Endothelial cell of umbilical vein (primary cell): ENCODE measurements at regions of chr3 and their contacts with region 1.

Region 1: DNA sequence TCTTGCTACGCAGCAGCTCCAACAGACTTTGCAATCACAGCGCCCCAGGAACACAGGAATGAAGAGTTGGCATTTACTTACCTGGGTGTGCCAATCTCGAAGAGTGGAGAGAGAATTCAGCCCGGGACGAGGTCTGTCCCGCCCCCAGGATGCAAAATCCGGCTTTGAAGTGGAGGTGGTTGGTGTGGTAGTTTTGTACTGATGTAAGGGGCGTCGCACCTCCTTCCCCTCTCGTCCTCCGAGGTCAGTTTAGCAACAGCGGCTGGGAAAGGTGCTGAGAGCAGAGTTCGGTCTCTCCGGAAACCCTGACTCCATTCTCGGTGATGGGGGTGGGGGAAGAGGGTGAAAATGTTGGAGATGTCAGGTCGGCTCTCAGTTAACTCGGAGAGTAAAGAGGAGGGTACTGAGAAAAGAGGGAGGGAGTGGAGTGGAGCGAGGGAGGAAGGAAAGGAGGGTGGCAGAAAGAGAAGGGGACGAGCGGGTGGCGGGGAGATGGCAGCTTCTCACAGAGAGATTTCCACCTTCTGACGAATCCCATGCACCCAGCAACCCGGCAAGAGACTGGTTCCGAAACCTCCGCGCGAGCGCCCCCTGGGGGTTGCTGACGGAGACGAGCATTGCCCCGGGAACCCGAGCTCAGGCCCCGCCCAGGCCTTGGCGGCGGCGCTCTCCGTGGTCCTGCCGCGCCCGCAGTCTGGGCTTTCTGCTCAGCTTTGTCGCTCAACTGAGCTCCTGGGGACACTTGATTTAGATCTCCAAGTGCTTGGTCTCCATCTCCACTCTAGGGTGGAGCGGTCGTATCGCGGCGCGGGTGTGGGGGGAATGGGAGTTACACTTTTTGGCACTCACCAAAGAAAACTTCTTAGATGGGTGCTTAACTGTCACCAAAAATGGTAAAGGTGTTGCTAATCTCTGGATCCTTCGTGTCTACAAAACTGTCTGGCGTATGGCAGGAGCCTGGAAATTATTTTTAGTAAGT is at the start of gene CPNE4:
- DNase-seq: peak; percentile 60
- H3K4me3 ChIP-seq: no peak within 1 kb of the TSS
- H3K27ac ChIP-seq: no peak within 1 kb of the TSS
- H3K4me1 ChIP-seq: no peaks in the 10 kb centered on the region
- H3K27me3 ChIP-seq: peaks cover 25 to 31% of the 10 kb centered on the region in 2 experiments
- CTCF ChIP-seq: peak; percentile 87 to 95
- POLR2A ChIP-seq: no peak
- total RNA-seq, gene CPNE4: not detected in 2 replicates

Region 2: GRCh38 chr3:131033480-131034080 is 1001.2 kb before region 1 on chr3:
- CTCF ChIA-PET with region 1: interaction called, 42 read pairs
- POLR2A ChIA-PET with region 1: no interaction called
- dilution Hi-C with region 1: no loop called
- intact Hi-C with region 1: loop called (anchors 1 kb)
- DNase-seq: peak; percentile 75
- H3K4me3 ChIP-seq: no peak overlapping the region
- H3K27ac ChIP-seq: no peak overlapping the region
- H3K4me1 ChIP-seq: no peaks in the 10 kb centered on the region
- H3K27me3 ChIP-seq: no peaks in the 10 kb centered on the region
- CTCF ChIP-seq: peak; percentile 32
- POLR2A ChIP-seq: no peak

Region 3: DNA sequence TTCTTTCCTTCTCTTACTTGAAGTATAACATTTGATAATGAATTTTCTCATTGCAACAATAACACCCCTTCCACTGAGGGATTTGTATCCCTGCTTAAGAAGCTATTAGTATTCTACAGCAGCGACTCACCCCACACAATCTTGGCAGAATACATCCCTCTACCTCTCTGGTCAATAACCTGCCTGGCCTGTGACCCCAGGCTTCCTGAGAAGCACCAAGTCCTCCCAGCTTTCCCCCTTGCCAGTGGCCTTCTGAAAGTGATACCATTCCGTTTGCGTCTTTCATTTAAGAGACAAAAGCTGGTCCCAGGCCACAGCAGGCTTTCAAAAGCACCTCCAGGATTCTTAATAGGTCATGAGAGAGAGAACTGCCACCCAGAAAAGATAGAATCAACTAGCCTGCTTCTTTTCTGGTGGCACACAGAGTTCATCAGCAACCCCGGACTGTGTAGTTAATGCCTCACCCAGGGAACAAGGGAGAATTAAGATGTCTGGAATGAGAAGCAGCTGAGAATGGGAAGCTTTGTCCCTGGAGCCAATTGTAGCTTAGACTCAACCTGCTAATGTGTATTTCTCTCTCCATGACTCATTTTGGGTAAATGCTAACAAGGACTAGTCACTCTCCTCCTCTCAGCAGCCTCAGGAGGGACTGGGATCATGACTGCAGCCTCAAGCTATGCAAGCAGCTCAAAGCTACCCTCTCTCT is 101.0 kb after region 1 on chr3:
- CTCF ChIA-PET with region 1: interaction called, 21 read pairs
- POLR2A ChIA-PET with region 1: no interaction called
- dilution Hi-C with region 1: no loop called
- intact Hi-C with region 1: loop called (anchors 2 kb)
- DNase-seq: peak; percentile 75
- H3K4me3 ChIP-seq: no peak overlapping the region
- H3K27ac ChIP-seq: peak overlapping the region; percentile 92
- H3K4me1 ChIP-seq: peaks cover 26% of the 10 kb centered on the region
- H3K27me3 ChIP-seq: peaks cover 0 to 2% of the 10 kb centered on the region in 2 experiments
- CTCF ChIP-seq: no peak
- POLR2A ChIP-seq: no peak

Region 4: GRCh38 chr3:132210476-132211346 is 175.9 kb after region 1 on chr3:
- CTCF ChIA-PET with region 1: interaction called, 62 read pairs
- POLR2A ChIA-PET with region 1: no interaction called
- dilution Hi-C with region 1: no loop called
- intact Hi-C with region 1: loop called (anchors 1 kb)
- DNase-seq: peak; percentile 9
- H3K4me3 ChIP-seq: no peak overlapping the region
- H3K27ac ChIP-seq: no peak overlapping the region
- H3K4me1 ChIP-seq: no peaks in the 10 kb centered on the region
- H3K27me3 ChIP-seq: peaks cover 4 to 8% of the 10 kb centered on the region in 2 experiments
- CTCF ChIP-seq: peak; percentile 50 to 53
- POLR2A ChIP-seq: no peak

Region 5: DNA sequence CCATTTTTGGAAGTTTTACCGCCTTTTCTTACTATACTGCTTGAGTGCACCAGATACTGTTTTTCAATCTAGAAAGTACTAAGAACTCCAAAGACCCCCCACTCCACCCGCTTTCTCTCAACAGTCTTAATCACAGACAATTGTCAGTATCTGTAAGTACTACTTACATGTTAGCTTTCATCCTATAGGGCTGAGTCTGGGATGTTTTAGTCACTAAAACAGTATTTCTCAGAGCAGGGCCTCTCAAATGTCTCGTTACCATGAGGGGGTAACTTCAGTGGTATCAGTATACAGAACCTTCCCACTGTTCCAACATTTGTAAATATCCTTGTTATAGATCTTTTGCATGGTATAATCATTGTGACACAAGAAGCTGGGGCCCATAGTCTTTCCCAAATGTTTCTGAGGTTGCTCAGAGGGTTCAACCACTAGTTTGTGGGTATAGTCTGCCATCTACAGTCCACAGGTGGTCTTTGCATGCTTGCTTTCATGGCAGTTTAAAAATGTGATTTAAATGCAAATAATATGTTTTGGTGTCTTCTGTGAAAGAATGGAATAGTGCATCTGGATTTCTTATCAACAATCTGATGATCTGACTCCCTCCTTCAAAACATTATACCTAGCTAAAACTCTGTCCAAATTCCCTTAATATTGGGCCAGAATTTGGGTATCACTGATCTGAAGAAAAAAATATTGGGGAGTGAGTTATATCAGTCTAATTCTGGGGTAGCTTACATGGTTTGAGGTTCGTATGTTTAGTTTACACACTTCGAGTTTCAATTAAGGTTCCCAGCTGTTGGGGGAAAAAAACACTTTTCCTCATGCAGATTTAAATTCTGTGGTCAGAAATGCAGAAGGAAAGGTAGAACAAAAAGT is 364.5 kb after region 1 on chr3:
- CTCF ChIA-PET with region 1: interaction called, 5 read pairs
- POLR2A ChIA-PET with region 1: no interaction called
- dilution Hi-C with region 1: no loop called
- intact Hi-C with region 1: loop called (anchors 5 kb)
- DNase-seq: peak; percentile 58
- H3K4me3 ChIP-seq: no peak overlapping the region
- H3K27ac ChIP-seq: no peak overlapping the region
- H3K4me1 ChIP-seq: peaks cover 3% of the 10 kb centered on the region
- H3K27me3 ChIP-seq: no peaks in the 10 kb centered on the region
- CTCF ChIP-seq: peak; percentile 72 to 74
- POLR2A ChIP-seq: no peak